ENCODE measurements at regions of chr3 and their contacts with region 1.

Region 1: GRCh38 chr3:191165802-191166201 is 33.2 kb upstream of the OSTN start:
- DNase-seq: no peak
- ATAC-seq: no peak
- H3K4me3 ChIP-seq: no peak overlapping the region
- H3K27ac ChIP-seq: no peak overlapping the region
- H3K4me1 ChIP-seq: peaks cover 0 to 10% (median 0%) of the 10 kb centered on the region in 9 donors
- H3K27me3 ChIP-seq: no peaks in the 10 kb centered on the region
- CTCF ChIP-seq: no peak

Region 2: GRCh38 chr3:191176038-191176785 is 10.4 kb after region 1 on chr3:
- intact Hi-C with region 1: loop called in 1 of 10 experiments (anchors 2 kb)
- DNase-seq: no peak
- ATAC-seq: no peak
- H3K4me3 ChIP-seq: no peak overlapping the region
- H3K27ac ChIP-seq: no peak overlapping the region
- H3K4me1 ChIP-seq: peaks cover 0 to 7% (median 0%) of the 10 kb centered on the region in 9 donors
- H3K27me3 ChIP-seq: no peaks in the 10 kb centered on the region
- CTCF ChIP-seq: no peak

Region 3: DNA sequence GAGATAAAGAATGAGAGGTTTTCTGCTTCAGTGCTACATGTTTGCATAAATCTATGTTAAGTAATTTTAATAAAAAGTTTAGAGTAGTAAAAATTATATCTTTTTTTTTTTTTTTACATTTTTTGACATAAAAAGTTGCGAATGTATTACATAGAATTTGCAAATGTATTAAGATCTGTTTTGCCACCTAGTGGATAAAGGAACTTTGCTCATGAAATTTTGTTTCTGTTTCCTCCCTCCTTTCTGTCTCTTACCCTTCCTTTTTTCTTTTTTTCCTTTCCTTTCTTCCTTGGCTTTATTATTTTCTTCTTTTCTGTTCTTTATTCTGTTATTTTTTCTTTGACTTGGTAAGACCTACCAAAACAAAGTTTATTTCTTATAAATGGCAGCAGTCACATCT is 223.0 kb after region 1 on chr3:
- intact Hi-C with region 1: no loop called
- DNase-seq: no peak
- ATAC-seq: no peak
- H3K4me3 ChIP-seq: no peak overlapping the region
- H3K27ac ChIP-seq: no peak overlapping the region
- H3K4me1 ChIP-seq: peaks cover 0 to 9% (median 0%) of the 10 kb centered on the region in 9 donors
- H3K27me3 ChIP-seq: no peaks in the 10 kb centered on the region
- CTCF ChIP-seq: peak in 7 of 9 donors; percentile 21 to 53 (median 41)

Region 4: DNA sequence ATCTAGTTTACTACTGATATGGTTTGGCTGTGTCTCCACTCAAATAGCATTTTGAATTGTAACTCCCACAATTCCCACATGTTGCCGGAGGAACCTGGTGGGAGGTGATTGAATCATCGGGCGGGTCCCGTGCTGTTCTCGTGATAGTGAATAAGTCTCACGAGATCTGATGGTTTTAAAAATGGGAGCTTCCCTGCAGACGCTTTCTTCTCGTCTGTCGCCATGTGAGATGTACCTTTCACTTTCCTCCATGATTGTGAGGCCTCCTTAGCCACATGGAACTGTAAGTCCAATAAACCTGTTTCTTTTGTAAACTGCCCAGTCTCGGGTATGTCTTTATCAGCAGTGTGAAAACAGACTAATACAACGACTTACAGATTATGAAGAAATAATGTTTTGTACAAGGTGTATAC is 259.5 kb after region 1 on chr3:
- intact Hi-C with region 1: no loop called
- DNase-seq: no peak
- ATAC-seq: no peak
- H3K4me3 ChIP-seq: peak overlapping the region in 2 of 10 donors; percentile 11
- H3K27ac ChIP-seq: no peak overlapping the region
- H3K4me1 ChIP-seq: no peaks in the 10 kb centered on the region
- H3K27me3 ChIP-seq: no peaks in the 10 kb centered on the region
- CTCF ChIP-seq: no peak